K562 (cell line): ENCODE measurements at regions of chr2 and their contacts with region 1.

Region 1: DNA sequence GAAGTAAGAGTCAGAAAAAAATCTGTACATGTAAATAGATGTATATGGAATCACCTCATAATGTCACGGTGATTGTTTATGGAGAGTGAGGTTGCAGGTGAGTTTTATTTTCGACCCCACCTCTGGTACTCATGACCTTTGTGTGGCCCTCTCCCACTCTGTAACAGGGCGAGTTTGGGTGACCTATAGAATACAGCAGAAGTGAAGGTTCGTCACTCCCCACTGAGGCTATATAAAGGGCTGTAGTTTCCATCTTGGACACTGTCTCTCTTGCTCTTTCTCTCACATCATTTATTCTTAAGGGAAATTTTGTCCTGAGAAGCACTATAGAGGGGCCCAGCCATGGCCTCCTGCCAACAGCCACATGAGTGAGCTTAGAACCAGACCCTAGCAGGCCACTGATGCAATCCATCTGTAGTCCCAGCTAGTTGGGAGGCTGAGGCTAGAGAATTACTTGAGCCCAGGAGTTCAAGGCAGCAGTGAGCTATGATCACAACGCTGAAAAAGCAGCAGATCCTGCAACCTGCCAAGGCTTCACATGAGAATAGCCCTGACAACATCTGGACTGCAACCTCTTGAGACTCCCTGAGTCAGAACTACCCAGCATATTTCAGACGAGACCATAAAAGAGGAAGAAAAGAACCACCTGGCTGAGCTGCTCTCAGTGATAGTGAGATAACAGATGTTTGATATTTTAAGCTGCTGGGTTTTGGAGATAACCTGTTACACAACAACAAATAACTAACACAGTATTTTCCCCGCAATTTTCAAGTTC is 74.3 kb upstream of the SLC1A4 start:
- DNase-seq: peak in 2 of 4 experiments; percentile 21 to 50
- ATAC-seq: peak; percentile 38
- H3K4me3 ChIP-seq: no peak overlapping the region
- H3K27ac ChIP-seq: no peak overlapping the region; the same call in 2 of the 3 replicates
- H3K4me1 ChIP-seq: peaks cover 6 to 26% of the 10 kb centered on the region in 2 experiments; a peak in 3 of 5 replicates
- H3K27me3 ChIP-seq: no peaks in the 10 kb centered on the region
- CTCF ChIP-seq: no peak
- EP300 ChIP-seq: peak; percentile 68
- POLR2A ChIP-seq: no peak
- RAD21 ChIP-seq: no peak

Region 2: GRCh38 chr2:64873472-64873924 is 41.4 kb before region 1 on chr2:
- CTCF ChIA-PET with region 1: no interaction called
- POLR2A ChIA-PET with region 1: no interaction called
- in situ Hi-C with region 1: no loop called
- intact Hi-C with region 1: no loop called
- DNase-seq: peak; percentile 77 to 86 (median 84)
- ATAC-seq: peak; percentile 95
- H3K4me3 ChIP-seq: no peak overlapping the region
- H3K27ac ChIP-seq: no peak overlapping the region
- H3K4me1 ChIP-seq: peaks cover 7 to 14% of the 10 kb centered on the region in 2 experiments; a peak in 4 of 5 replicates
- H3K27me3 ChIP-seq: no peaks in the 10 kb centered on the region
- CTCF ChIP-seq: peak; percentile 89 to 96 (median 91)
- EP300 ChIP-seq: no peak
- POLR2A ChIP-seq: no peak
- RAD21 ChIP-seq: peak; percentile 82 to 94

Region 3: DNA sequence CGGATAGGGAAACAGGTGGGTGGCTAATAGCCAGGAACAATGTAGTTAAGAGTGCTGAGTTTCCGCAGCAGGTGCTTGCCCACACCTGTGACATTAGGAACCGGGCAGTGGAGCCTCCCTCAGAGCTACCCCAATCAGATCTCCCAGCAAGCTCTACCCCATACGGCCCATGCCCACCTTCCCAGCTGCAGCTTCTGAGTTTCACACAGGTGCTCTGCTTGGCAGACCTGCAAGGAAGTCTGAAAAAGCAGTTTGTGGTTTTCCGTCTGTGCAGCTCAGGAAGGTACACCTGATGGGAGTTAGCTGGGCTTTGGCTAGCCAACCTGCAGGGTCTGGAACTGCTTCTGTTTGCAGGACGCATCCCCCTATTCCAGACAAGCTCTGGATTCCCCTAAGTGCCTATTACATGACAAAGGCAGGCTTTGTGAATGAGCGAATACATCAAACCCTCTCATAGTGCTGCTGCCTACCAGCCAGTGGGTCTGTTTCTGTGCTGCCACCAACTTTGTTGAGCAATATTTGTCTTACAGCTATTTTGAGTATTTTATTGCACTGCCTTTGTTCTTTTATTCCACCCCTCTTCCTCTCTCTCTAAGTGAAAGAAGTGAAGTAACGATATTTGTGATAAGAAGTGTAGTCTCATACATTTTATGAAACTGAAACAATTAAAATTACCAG is 116.6 kb after region 1 on chr2:
- CTCF ChIA-PET with region 1: interaction called, 28 read pairs
- POLR2A ChIA-PET with region 1: interaction called, 3 read pairs
- in situ Hi-C with region 1: no loop called
- intact Hi-C with region 1: loop called (anchors 2 kb)
- DNase-seq: no peak
- ATAC-seq: no peak
- H3K4me3 ChIP-seq: no peak overlapping the region
- H3K27ac ChIP-seq: no peak overlapping the region
- H3K4me1 ChIP-seq: peaks cover 3 to 5% of the 10 kb centered on the region in 2 experiments; a peak in 1 of 5 replicates
- H3K27me3 ChIP-seq: no peaks in the 10 kb centered on the region
- CTCF ChIP-seq: no peak
- EP300 ChIP-seq: no peak
- POLR2A ChIP-seq: no peak
- RAD21 ChIP-seq: no peak

Region 4: DNA sequence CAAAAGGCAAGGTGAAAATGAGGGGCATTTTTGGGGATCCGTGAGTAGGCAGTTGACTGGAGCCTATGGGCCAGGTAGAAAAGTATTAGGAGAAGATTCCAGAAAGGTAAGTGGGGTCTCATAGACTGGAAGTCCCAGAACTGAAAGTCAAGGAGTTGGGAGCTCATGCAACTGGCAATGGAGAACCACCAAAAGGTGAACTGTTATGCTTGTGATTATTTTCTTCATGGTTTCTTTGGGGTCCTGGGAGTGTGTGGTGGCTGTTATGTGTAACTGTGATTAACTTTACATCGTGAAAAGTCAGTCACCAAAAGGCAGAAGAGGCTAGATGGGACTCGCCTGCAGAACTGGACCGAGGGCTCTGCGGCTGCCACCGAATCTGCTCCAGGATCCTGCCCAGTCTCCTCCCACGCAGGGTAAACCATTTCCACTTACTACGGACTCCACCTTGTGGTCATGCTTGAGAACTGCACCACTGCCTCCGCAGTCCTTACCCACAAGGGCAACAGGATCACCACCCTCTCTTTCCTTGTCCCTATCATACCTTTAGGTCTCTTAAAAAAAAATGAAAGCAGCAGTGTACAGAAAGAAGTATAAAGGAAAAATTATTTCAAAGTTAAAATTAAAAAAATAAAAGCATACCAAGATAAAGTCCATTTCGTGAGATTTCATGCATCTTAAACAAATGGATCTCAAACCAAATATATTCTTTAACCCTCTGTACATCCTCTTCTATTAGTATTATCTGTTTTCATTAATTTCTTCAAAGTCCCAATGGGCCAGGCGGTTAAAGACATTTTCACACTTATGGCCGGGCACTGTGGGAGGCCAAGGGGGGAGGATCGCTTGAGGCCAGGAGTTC is 125.7 kb after region 1 on chr2:
- CTCF ChIA-PET with region 1: interaction called, 22 read pairs
- POLR2A ChIA-PET with region 1: interaction called, 3 read pairs
- in situ Hi-C with region 1: loop called (anchors 5 kb)
- intact Hi-C with region 1: loop called (anchors 1 kb)
- DNase-seq: peak; percentile 81 to 87 (median 86)
- ATAC-seq: peak; percentile 98
- H3K4me3 ChIP-seq: no peak overlapping the region
- H3K27ac ChIP-seq: no peak overlapping the region
- H3K4me1 ChIP-seq: peaks cover 2 to 4% of the 10 kb centered on the region in 2 experiments; a peak in 2 of 5 replicates
- H3K27me3 ChIP-seq: no peaks in the 10 kb centered on the region
- CTCF ChIP-seq: peak; percentile 92 to 94 (median 93)
- EP300 ChIP-seq: no peak
- POLR2A ChIP-seq: no peak
- RAD21 ChIP-seq: peak; percentile 94 to 95

Region 5: DNA sequence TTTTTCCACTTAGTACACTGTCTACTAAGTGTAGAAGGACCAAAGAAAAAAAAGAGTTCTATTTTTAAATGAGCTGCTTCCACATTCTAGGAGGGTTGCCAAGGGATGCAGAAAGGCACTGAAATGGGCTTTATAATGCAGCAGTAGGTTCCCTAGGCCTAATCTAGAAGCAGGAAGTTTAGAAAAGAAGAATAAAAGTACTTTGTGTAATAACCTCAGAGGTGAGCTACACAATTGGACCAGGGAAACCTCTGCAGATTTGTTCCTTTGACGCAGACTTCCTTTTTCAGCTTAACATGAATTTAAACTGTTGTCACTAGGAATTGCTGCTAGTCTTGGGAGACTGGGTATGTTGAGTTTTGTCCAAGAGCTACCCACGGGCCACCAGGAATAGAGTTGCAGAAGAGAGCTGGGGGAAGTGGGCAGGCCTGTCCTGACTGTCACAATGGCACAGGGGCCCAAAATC is 249.5 kb after region 1 on chr2:
- CTCF ChIA-PET with region 1: no interaction called
- POLR2A ChIA-PET with region 1: no interaction called
- in situ Hi-C with region 1: loop called (anchors 25 kb)
- intact Hi-C with region 1: no loop called
- DNase-seq: no peak
- ATAC-seq: no peak; the same call in 2 of the 3 replicates
- H3K4me3 ChIP-seq: no peak overlapping the region
- H3K27ac ChIP-seq: no peak overlapping the region
- H3K4me1 ChIP-seq: peaks cover 0 to 3% of the 10 kb centered on the region in 2 experiments; a peak in 1 of 5 replicates
- H3K27me3 ChIP-seq: no peaks in the 10 kb centered on the region
- CTCF ChIP-seq: no peak
- EP300 ChIP-seq: no peak
- POLR2A ChIP-seq: no peak
- RAD21 ChIP-seq: no peak

Region 6: DNA sequence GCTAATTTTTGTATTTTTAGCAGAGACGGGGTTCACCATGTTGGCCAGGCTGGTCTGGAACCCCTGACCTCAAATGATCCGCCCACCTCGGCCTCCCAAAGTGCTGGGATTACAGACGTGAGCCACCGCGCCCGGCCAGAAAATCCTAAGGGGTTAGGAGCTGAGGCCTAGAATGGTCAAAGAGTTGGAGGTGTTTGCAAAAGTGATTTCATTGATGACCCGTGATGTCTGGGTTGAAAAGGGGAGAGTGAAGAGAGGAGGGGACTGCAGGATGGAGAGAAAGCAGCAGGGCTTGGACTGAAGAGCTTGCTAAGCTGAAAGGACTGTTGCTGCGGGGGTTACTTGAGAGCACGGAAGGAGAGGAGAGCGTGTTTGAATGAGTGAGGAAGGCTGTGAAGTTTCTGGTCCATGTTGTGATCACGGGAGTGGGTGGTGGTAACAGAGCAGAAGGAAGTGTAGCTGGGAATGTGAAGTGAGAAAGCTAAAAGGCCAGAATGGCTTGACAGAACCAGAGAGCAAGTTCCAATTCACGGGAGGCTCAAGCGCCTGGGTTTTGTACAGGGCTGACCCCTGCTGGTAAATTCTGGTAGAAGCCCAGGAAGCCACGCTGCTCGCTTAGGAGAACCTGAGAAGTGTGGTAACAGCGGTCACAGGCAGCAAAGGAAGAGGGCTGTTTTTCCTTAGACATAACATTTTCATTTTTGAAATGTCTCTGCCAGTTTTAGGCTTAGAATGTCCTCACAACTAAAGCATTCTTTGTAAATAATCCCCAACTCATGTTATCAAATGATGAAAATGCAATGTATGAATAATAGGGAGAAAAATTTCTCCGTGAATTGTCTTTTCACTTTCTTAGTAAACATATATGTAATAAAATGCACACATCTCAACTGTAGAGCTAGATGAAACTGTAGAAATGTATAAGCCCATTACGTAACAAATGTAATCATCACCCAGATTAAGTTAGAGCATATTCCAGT is 272.2 kb after region 1 on chr2:
- CTCF ChIA-PET with region 1: interaction called, 7 read pairs
- POLR2A ChIA-PET with region 1: no interaction called
- in situ Hi-C with region 1: no loop called
- intact Hi-C with region 1: loop called (anchors 1 kb)
- DNase-seq: peak; percentile 80 to 87 (median 82)
- ATAC-seq: peak; percentile 99
- H3K4me3 ChIP-seq: no peak overlapping the region
- H3K27ac ChIP-seq: no peak overlapping the region
- H3K4me1 ChIP-seq: peaks cover 3 to 4% of the 10 kb centered on the region in 2 experiments; a peak in 2 of 5 replicates
- H3K27me3 ChIP-seq: no peaks in the 10 kb centered on the region
- CTCF ChIP-seq: peak; percentile 83 to 90 (median 87)
- EP300 ChIP-seq: no peak
- POLR2A ChIP-seq: no peak
- RAD21 ChIP-seq: peak; percentile 71 to 89

Region 7: GRCh38 chr2:65576861-65577601 is 662.1 kb after region 1 on chr2:
- CTCF ChIA-PET with region 1: no interaction called
- POLR2A ChIA-PET with region 1: no interaction called
- in situ Hi-C with region 1: loop called (anchors 10 kb)
- intact Hi-C with region 1: loop called (anchors 2 kb)
- DNase-seq: peak in 1 of 4 experiments; percentile 52
- ATAC-seq: peak; percentile 53; the same call in 2 of the 3 replicates
- H3K4me3 ChIP-seq: no peak overlapping the region
- H3K27ac ChIP-seq: no peak overlapping the region
- H3K4me1 ChIP-seq: peaks cover 2 to 4% of the 10 kb centered on the region in 2 experiments; a peak in 3 of 5 replicates
- H3K27me3 ChIP-seq: peaks cover 3 to 12% of the 10 kb centered on the region in 2 experiments; a peak in 4 of 5 replicates
- CTCF ChIP-seq: no peak
- EP300 ChIP-seq: no peak
- POLR2A ChIP-seq: no peak
- RAD21 ChIP-seq: no peak